Left cardiac atrium (tissue), 4 donors: ENCODE measurements at regions of chr1 and their contacts with region 1.

Region 1: DNA sequence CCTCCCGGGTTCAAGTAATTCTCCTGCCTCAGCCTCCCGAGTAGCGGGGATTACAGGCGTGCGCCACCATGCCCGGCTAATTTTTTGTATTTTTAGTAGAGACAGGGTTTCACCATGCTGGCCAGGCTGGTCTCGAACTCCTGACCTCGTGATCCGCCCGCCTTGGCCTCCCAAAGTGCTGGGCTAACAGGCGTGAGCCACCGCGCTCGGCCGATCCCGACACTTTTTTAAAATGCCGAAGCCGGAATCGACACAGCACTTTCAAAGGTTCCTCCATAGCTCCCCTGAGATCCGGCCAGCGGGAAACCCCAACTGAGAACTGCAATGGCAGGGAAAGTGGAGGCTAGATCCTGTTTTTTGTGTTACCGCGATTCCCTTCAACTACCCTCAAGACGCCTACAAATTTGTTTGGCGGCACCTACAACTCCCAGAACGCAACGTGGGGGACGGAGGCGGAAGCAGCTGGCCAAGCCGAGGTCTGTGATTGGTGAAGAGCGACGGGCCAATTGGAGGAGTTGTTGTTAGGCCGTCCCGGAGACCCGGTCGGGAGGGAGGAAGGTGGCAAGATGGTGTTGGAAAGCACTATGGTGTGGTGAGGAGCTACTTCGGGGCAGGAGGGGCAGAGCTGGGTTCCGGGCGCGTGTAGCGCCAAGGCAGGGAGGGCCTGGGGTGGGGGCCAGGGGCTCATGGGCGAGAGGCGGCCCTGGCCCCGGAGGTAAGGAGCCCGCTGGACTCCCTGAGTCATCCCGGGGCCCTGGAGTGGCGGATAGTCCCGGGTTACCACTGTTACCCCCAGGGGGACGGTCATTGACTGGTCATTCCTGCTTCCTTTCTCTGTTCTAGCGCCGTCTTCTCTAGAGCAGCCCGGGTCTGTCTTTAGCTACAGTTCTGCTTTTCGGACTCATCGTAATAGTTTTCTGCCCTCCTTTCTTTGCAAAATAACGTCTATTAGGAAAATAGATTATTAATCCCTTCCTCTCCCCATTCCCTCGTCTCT is at the start of gene PSMD4:
- DNase-seq: peak; percentile 96
- ATAC-seq: peak; percentile 98 to 99
- total RNA-seq, gene PSMD4: 134 to 136 TPM

Region 2: GRCh38 chr1:151198255-151199127 is 56.0 kb before region 1 on chr1 and contains the start of gene PIP5K1A:
- intact Hi-C with region 1: loop called (anchors 2 to 5 kb)
- DNase-seq: peak; percentile 100
- ATAC-seq: peak; percentile 94 to 97
- total RNA-seq, gene PIP5K1A: 34.7 to 46.9 TPM

Region 3: GRCh38 chr1:151281969-151282882 is 27.7 kb after region 1 on chr1 and contains the start of gene ZNF687:
- intact Hi-C with region 1: no loop called
- DNase-seq: peak; percentile 100
- ATAC-seq: peak; percentile 94 to 95
- total RNA-seq, gene ZNF687: 12.8 to 15.6 TPM

Region 4: DNA sequence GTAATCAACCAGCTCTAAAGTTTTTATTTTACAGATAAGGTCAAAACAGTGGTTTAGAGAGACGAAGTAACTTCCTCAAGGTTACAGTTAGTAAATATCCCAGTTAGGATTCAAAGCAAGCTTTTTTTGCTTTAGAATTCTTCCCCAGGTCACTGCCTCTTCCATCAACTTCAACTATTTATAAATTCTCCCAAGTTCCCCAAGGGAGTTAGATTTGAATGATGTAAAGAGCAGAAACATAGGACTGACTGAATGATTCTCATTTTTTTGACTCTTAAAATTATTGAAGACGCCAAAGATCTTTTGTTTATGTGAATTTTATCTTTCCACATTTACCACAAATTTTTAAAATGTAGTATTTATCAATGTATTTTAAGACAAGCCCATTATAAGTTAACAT is 200.7 kb after region 1 on chr1:
- intact Hi-C with region 1: no loop called
- DNase-seq: no peak
- ATAC-seq: no peak